Right ventricle myocardium superior (tissue), 1 donor: ENCODE measurements at regions of chr18 and their contacts with region 1.

Region 1: GRCh38 chr18:45090526-45091140 is 409.9 kb downstream of the SETBP1 start:
- DNase-seq: no peak
- ATAC-seq: no peak

Region 2: DNA sequence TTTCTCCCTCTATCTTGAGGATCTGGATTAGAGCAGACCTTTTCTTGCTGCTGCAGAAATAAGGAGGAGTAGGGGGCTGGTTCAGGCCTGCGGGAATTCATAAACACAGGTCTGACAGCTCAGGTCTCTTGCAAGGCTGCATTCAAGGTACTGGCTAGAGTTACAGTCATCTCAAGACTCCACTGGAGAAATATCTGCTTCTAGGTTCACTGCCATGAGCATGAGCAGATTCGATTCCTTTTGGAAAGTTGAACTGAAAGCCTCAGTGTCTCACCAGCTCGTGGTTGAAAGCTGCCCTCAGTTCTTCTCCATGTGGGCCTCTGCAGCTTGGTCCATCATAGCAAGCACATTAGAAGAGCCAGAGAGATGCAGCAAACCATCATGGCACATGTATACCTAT is 534.3 kb before region 1 on chr18:
- intact Hi-C with region 1: loop called (anchors 5 kb)
- DNase-seq: no peak
- ATAC-seq: no peak

Region 3: DNA sequence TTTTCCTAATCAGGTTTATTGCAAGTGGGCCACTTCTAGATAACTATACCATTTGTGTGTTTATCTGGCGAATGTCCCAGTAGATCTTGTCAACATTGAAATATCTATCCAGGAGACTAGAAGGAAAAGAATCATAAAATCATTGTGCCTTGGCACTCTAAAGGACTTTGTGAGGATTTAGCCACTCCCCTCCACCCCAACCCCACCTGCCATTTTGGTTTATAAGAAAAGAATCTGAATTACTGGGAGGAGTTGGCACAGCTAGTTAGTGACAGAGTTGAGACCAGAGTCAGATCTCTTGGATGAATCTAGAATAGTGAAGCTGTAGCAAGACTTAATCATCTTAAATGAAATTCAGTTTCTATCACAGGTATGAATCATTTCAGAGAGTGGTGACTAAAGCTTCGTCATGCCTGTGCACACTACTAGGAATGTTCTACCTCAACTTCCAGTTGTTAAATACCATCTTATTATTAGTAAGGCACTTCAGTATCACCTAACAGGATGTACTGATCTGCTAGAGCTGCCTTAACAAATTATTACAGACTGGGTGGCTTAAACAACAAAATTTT is 311.9 kb after region 1 on chr18:
- intact Hi-C with region 1: no loop called
- DNase-seq: no peak
- ATAC-seq: no peak